CD8-positive, alpha-beta T cell (primary cell): ENCODE measurements at regions of chr13 and their contacts with region 1.

Region 1: GRCh38 chr13:28058866-28059624 is 41.3 kb downstream of the FLT3 start:
- DNase-seq: peak in 8 of 9 experiments; percentile 15 to 55 (median 40)
- ATAC-seq: no peak
- H3K4me3 ChIP-seq: no peak overlapping the region
- H3K4me3 Mint-ChIP-seq: no peak overlapping the region
- H3K27ac ChIP-seq: no peak overlapping the region
- H3K27ac Mint-ChIP-seq: no peak overlapping the region
- H3K4me1 ChIP-seq: no peaks in the 10 kb centered on the region
- H3K4me1 Mint-ChIP-seq: no peaks in the 10 kb centered on the region
- H3K27me3 ChIP-seq: no peaks in the 10 kb centered on the region
- H3K27me3 Mint-ChIP-seq: peaks cover 18% of the 10 kb centered on the region
- CTCF ChIP-seq: peak; percentile 21

Region 2: GRCh38 chr13:28273919-28274318 is 214.9 kb after region 1 on chr13:
- CTCF ChIA-PET with region 1: no interaction called
- POLR2A ChIA-PET with region 1: no interaction called
- intact Hi-C with region 1: loop called in 1 of 2 experiments (anchors 10 kb)
- DNase-seq: no peak
- ATAC-seq: no peak
- H3K4me3 ChIP-seq: no peak overlapping the region
- H3K4me3 Mint-ChIP-seq: no peak overlapping the region
- H3K27ac ChIP-seq: no peak overlapping the region
- H3K27ac Mint-ChIP-seq: no peak overlapping the region
- H3K4me1 ChIP-seq: no peaks in the 10 kb centered on the region
- H3K4me1 Mint-ChIP-seq: peaks cover under 1% of the 10 kb centered on the region
- H3K27me3 ChIP-seq: no peaks in the 10 kb centered on the region
- H3K27me3 Mint-ChIP-seq: no peaks in the 10 kb centered on the region
- CTCF ChIP-seq: no peak